PC-3 (cell line): ENCODE measurements at regions of chr10 and their contacts with region 1.

Region 1: GRCh38 chr10:109456566-109457301 is 466.6 kb downstream of the XPNPEP1 start:
- DNase-seq: no peak
- ATAC-seq: no peak
- H3K4me3 ChIP-seq: no peak overlapping the region
- H3K27ac ChIP-seq: no peak overlapping the region
- H3K4me1 ChIP-seq: peaks cover 6% of the 10 kb centered on the region; the same call in 1 of the 2 replicates
- H3K27me3 ChIP-seq: no peaks in the 10 kb centered on the region
- CTCF ChIP-seq: no peak

Region 2: GRCh38 chr10:109379186-109379585 is 77.5 kb before region 1 on chr10:
- CTCF ChIA-PET with region 1: no interaction called
- POLR2A ChIA-PET with region 1: no interaction called
- intact Hi-C with region 1: no loop called
- DNase-seq: no peak
- ATAC-seq: no peak
- H3K4me3 ChIP-seq: no peak overlapping the region
- H3K27ac ChIP-seq: no peak overlapping the region
- H3K4me1 ChIP-seq: peaks cover 9% of the 10 kb centered on the region
- H3K27me3 ChIP-seq: no peaks in the 10 kb centered on the region
- CTCF ChIP-seq: no peak

Region 3: DNA sequence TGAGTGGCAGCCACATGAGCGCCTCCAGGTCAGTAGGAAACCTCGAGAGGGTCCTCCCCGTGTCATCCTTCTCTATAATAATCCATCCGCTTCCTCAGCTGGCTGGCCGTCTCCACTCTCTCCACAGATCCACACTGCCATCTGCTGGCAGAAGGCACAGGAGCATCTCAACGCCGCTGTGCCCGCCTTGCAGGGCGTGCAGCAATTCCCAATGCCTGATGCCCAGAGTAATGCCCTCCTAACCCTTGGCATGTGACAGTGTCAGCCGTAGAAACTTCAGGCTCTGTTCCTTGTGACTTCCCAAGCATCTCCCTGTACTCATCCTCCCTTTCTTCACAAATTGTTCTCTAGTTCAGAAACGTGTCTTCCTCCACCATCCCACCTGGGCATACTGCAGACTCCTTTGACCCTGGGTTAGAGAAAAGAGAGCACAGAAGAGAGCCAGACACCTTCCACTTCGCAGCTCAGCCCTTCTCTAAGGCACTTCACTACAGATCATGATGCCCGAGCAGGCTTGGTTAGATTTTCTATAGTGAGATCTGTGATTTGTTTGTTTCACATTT is 395.8 kb after region 1 on chr10:
- CTCF ChIA-PET with region 1: no interaction called
- POLR2A ChIA-PET with region 1: no interaction called
- intact Hi-C with region 1: loop called (anchors 10 kb)
- DNase-seq: peak; percentile 85
- ATAC-seq: peak; percentile 96
- H3K4me3 ChIP-seq: no peak overlapping the region
- H3K27ac ChIP-seq: no peak overlapping the region
- H3K4me1 ChIP-seq: no peaks in the 10 kb centered on the region
- H3K27me3 ChIP-seq: no peaks in the 10 kb centered on the region
- CTCF ChIP-seq: peak; percentile 87

Region 4: GRCh38 chr10:109883859-109884771 is 427.4 kb after region 1 on chr10:
- CTCF ChIA-PET with region 1: no interaction called
- POLR2A ChIA-PET with region 1: no interaction called
- intact Hi-C with region 1: no loop called
- DNase-seq: peak; percentile 82
- ATAC-seq: peak; percentile 92
- H3K4me3 ChIP-seq: no peak overlapping the region
- H3K27ac ChIP-seq: no peak overlapping the region
- H3K4me1 ChIP-seq: peaks cover 6% of the 10 kb centered on the region
- H3K27me3 ChIP-seq: no peaks in the 10 kb centered on the region
- CTCF ChIP-seq: peak; percentile 87